Caco-2 (cell line): ENCODE measurements at regions of chr9 and their contacts with region 1.

Region 1: DNA sequence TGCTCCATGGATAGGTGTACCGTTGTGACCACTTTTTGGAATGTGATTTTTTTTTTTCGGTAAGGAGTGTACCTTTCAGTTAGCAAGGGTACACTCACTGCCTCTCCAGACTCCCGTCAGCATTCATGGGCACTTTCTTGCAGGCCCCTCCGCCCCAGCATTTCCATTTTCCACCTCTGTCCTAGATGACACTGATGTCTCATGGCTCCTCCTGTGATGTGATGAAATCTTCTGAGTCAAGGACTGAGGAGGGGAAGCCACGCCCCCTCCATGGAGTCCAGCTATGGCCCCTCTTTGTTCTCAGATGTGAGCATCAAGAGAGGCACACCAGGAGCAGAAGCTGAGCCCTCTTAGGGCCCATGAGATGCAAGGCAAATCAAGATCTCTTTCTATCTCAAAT is 61.8 kb downstream of the CTSL start:
- DNase-seq: no peak
- H3K4me3 ChIP-seq: no peak overlapping the region
- H3K4me3 Mint-ChIP-seq: no peak overlapping the region
- H3K27ac Mint-ChIP-seq: no peak overlapping the region
- H3K4me1 ChIP-seq: peaks cover 24% of the 10 kb centered on the region
- H3K4me1 Mint-ChIP-seq: peaks cover 16% of the 10 kb centered on the region
- H3K27me3 ChIP-seq: no peaks in the 10 kb centered on the region
- H3K27me3 Mint-ChIP-seq: no peaks in the 10 kb centered on the region
- CTCF ChIP-seq: no peak

Region 2: GRCh38 chr9:87766703-87767102 is 21.0 kb before region 1 on chr9:
- CTCF ChIA-PET with region 1: no interaction called
- POLR2A ChIA-PET with region 1: no interaction called
- intact Hi-C with region 1: loop called (anchors 1 kb)
- DNase-seq: peak; percentile 76 to 84
- H3K4me3 ChIP-seq: no peak overlapping the region
- H3K4me3 Mint-ChIP-seq: no peak overlapping the region
- H3K27ac Mint-ChIP-seq: no peak overlapping the region
- H3K4me1 ChIP-seq: 0 out of 2 replicates have a peak, but pooled peaks cover 5% of the 10 kb centered on the region
- H3K4me1 Mint-ChIP-seq: peaks cover 6% of the 10 kb centered on the region
- H3K27me3 ChIP-seq: no peaks in the 10 kb centered on the region
- H3K27me3 Mint-ChIP-seq: no peaks in the 10 kb centered on the region
- CTCF ChIP-seq: no peak